Heart right ventricle (tissue), 16 donors: ENCODE measurements at regions of chr7 and their contacts with region 1.

Region 1: GRCh38 chr7:105673367-105674142 is 92.3 kb upstream of the EFCAB10 start:
- DNase-seq: peak in 1 of 2 donors; percentile 34
- ATAC-seq: peak in 7 of 8 donors; percentile 39 to 74 (median 50)
- H3K4me3 ChIP-seq: no peak overlapping the region
- H3K27ac ChIP-seq: peak overlapping the region in 3 of 10 donors; percentile 7 to 10 (median 8)
- H3K4me1 ChIP-seq: peaks cover 0 to 54% (median 34%) of the 10 kb centered on the region in 9 donors
- H3K27me3 ChIP-seq: no peaks in the 10 kb centered on the region
- CTCF ChIP-seq: no peak

Region 2: GRCh38 chr7:105713488-105714465 is 40.2 kb after region 1 on chr7:
- intact Hi-C with region 1: loop called in 1 of 10 experiments (anchors 5 kb)
- DNase-seq: no peak
- ATAC-seq: peak in 3 of 8 donors; percentile 28 to 57 (median 43)
- H3K4me3 ChIP-seq: no peak overlapping the region
- H3K27ac ChIP-seq: no peak overlapping the region
- H3K4me1 ChIP-seq: peaks cover 0 to 35% (median 20%) of the 10 kb centered on the region in 9 donors
- H3K27me3 ChIP-seq: no peaks in the 10 kb centered on the region
- CTCF ChIP-seq: no peak

Region 3: DNA sequence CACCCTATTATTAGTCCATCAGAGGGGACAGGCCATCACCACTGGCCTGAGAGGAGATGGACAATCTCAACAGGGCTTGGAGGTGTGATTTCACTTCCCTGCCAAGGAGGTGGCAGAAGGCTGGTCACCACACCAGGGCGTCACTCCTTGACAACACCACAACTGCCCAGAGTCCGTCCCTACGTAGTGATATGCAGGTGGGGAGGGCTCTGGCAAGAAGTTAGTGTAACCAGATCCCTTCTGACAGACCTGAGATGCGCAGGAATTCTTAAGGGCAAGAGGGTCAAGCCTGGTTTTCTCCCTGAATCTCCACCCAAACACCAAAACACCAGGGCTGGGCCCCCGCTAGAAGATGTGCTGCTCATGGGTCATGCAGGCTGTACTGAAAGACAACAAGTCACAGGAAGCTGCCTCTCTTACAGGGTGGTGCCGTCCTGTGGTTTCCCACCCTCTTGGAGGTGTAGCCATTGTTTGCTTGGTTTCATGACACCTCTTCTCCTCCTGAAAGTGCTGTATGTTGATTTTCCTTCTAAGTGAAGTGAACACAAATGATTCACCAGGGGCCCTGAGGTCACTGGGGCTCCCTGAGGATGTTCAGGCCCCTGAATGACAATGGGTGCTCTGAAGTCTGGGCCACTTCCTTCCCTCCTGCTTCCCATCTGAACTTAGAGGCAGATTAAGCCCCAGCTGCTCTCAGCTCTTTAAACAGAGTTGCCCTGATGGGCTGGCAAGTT is 175.7 kb after region 1 on chr7:
- intact Hi-C with region 1: no loop called
- DNase-seq: no peak
- ATAC-seq: peak in 5 of 8 donors; percentile 27 to 62 (median 48)
- H3K4me3 ChIP-seq: no peak overlapping the region
- H3K27ac ChIP-seq: peak overlapping the region in 3 of 10 donors; percentile 3 to 39 (median 6)
- H3K4me1 ChIP-seq: peaks cover 0 to 33% (median 21%) of the 10 kb centered on the region in 9 donors
- H3K27me3 ChIP-seq: no peaks in the 10 kb centered on the region
- CTCF ChIP-seq: no peak

Region 4: GRCh38 chr7:106273009-106273668 is 599.6 kb after region 1 on chr7:
- intact Hi-C with region 1: no loop called
- DNase-seq: no peak
- ATAC-seq: peak in 6 of 8 donors; percentile 28 to 71 (median 48)
- H3K4me3 ChIP-seq: no peak overlapping the region
- H3K27ac ChIP-seq: peak overlapping the region in 7 of 10 donors; percentile 2 to 57 (median 45)
- H3K4me1 ChIP-seq: peaks cover 0 to 64% (median 26%) of the 10 kb centered on the region in 9 donors
- H3K27me3 ChIP-seq: no peaks in the 10 kb centered on the region
- CTCF ChIP-seq: no peak